Activated T-helper 1 cell treated with anti-CD3 and anti-CD28 coated beads, Interleukin-12 subunit alpha, Interleukin-12 subunit beta, Interleukin-2, Interleukin-4 antibody, amounts not matched to agents 30 ng/mL and 10 ng/mL and 1 ng/mL, durations not matched to agents 14 hours and 24 hours and 36 hours (primary cell): ENCODE measurements at regions of chr10 and their contacts with region 1.

Region 1: GRCh38 chr10:91220194-91220953 is at the start of gene PCGF5:
- DNase-seq: peak; percentile 91
- H3K4me3 Mint-ChIP-seq: peak within 1 kb of the TSS; percentile 91
- H3K27ac Mint-ChIP-seq: peak within 1 kb of the TSS; percentile 79
- H3K4me1 Mint-ChIP-seq: peaks cover 54% of the 10 kb centered on the region
- H3K27me3 Mint-ChIP-seq: no peaks in the 10 kb centered on the region
- total RNA-seq, gene PCGF5: 51.7 TPM in 2 replicates

Region 2: GRCh38 chr10:91201213-91201996 is 19.0 kb before region 1 on chr10:
- intact Hi-C with region 1: loop called (anchors 1 kb)
- DNase-seq: peak; percentile 47
- H3K4me3 Mint-ChIP-seq: peak overlapping the region; percentile 68
- H3K27ac Mint-ChIP-seq: peak overlapping the region; percentile 92
- H3K4me1 Mint-ChIP-seq: peaks cover 81% of the 10 kb centered on the region
- H3K27me3 Mint-ChIP-seq: no peaks in the 10 kb centered on the region

Region 3: DNA sequence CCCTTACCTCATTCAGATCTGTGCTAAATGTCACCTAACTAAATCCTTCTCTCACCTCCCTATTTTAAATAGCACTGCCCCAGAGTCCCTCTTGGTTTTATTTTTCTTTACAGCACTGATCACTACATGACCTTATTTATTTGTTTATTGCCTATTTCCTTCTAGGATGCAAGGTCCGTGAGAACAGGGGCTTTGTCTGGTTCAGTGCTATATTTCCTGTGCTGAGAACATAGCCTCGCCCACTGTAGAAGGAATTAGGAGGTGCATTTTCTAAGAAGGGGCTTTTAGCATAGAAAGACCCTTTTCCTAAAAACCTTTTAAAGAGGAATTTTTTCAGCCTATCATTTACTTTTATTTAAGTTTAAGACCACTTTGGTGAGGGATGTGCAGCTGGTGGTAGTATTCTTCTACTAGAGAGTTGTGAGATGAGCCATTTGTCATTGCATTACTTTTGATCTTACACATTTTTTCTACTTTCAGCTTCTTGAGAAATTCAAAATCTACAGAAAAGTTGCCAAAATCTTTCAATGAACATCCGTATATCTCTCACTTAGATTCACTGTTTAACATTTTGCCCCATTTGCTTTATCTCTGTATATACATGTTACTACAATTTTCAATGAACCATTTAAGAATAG is 13.4 kb before region 1 on chr10:
- intact Hi-C with region 1: loop called (anchors 1 kb)
- DNase-seq: no peak
- H3K4me3 Mint-ChIP-seq: no peak overlapping the region
- H3K27ac Mint-ChIP-seq: peak overlapping the region; percentile 70
- H3K4me1 Mint-ChIP-seq: peaks cover 63% of the 10 kb centered on the region
- H3K27me3 Mint-ChIP-seq: no peaks in the 10 kb centered on the region